GM10248 (cell line): ENCODE measurements at regions of chr9 and their contacts with region 1.

Region 1: DNA sequence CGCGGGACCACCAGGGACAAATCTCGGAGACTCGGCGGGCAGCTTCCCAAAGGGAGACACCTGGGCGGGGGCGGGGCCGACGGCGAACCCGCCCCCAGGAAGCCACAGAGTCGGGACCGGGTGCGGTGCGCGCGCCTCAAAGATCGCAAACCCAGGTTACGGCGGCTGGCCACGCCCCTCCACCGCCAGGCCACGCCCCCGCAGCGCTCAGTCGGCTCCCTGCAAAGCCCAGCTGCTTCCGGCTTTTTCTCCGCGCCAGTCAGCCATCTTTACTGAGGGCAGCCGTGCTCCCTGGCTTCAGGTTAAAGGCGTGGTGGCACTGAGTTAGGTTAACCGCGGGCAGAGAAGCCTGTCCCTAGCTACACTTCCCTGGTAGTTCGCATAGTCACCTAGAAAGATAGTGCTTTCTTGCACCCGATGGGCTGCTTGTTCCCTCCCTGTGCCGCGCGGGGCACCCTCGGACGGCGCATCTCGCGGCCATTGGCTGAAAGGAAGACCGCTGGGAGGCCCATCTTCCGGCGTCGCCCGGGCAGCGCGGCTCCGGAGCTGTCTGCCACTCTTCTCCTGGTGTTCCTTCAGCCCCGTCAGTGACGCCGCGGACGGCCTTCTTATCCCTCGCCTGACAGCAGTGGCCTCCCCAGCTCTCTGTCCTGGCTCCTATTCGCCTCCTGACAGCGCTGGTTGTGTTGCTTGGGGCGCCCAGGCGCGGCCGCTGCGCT is at the start of gene TBC1D2:
- DNase-seq: peak; percentile 99
- CTCF ChIP-seq: no peak

Region 2: DNA sequence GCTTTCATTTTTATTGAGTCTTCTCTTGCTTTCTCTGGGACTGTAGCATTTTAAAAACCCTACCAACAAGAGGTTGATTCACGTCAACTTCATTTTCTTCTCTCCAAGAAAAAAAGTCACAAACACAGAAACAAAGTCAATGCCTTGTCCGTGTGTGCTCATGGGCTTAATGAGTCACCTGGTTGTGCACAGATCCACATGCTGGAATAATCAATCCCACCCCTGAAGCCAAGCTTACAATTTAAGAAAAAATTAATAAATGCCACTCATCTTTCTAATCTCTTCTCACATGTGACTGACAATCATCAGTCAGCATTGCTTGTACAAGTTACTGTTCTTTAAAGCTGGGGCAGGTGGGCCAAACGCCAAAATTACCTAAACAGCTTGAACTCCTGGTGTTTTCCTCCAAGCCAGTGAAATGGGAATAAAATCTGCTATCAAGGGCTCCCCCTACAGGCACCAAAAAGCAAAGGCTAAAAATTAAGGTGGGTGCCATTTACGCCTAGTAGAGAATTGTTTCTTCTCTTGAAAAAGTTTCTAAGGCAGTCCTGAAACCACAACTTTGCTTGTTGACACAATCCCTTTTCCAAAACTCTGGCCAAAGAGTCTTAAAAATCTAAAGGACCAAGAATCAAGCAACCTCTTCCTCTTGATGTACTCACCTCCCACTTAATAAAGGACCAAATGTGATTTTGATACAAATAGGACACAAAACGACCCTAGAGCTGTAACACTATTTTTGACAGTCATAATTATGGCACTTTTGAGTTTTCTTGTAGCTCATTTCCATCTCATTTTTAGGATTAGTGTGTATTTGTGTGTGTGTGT is 354.8 kb before region 1 on chr9:
- CTCF ChIA-PET with region 1: interaction called, 11 read pairs
- POLR2A ChIA-PET with region 1: no interaction called
- DNase-seq: peak; percentile 54
- CTCF ChIP-seq: peak; percentile 77

Region 3: GRCh38 chr9:98287383-98287782 is 31.6 kb after region 1 on chr9:
- CTCF ChIA-PET with region 1: no interaction called
- POLR2A ChIA-PET with region 1: no interaction called
- DNase-seq: no peak
- CTCF ChIP-seq: no peak